Activated B cell treated with CpG ODN at 0.5 μM for 24 hours (primary cell): ENCODE measurements at regions of chr16 and their contacts with region 1.

Region 1: GRCh38 chr16:47258874-47259461 is 115.2 kb upstream of the NETO2 start:
- DNase-seq: no peak
- ATAC-seq: no peak
- H3K4me3 Mint-ChIP-seq: no peak overlapping the region
- H3K27ac Mint-ChIP-seq: no peak overlapping the region
- H3K4me1 Mint-ChIP-seq: no peaks in the 10 kb centered on the region
- H3K27me3 Mint-ChIP-seq: no peaks in the 10 kb centered on the region
- CTCF ChIP-seq: peak; percentile 92

Region 2: GRCh38 chr16:46937536-46937935 is 321.4 kb before region 1 on chr16:
- CTCF ChIA-PET with region 1: no interaction called
- POLR2A ChIA-PET with region 1: no interaction called
- intact Hi-C with region 1: no loop called
- DNase-seq: no peak
- ATAC-seq: no peak
- H3K4me3 Mint-ChIP-seq: no peak overlapping the region
- H3K27ac Mint-ChIP-seq: no peak overlapping the region
- H3K4me1 Mint-ChIP-seq: peaks cover 6% of the 10 kb centered on the region
- H3K27me3 Mint-ChIP-seq: no peaks in the 10 kb centered on the region
- CTCF ChIP-seq: no peak

Region 3: GRCh38 chr16:46947900-46948547 is 310.9 kb before region 1 on chr16:
- CTCF ChIA-PET with region 1: no interaction called
- POLR2A ChIA-PET with region 1: no interaction called
- intact Hi-C with region 1: loop called (anchors 5 kb)
- DNase-seq: no peak
- ATAC-seq: peak; percentile 74
- H3K4me3 Mint-ChIP-seq: no peak overlapping the region
- H3K27ac Mint-ChIP-seq: no peak overlapping the region
- H3K4me1 Mint-ChIP-seq: peaks cover 7% of the 10 kb centered on the region
- H3K27me3 Mint-ChIP-seq: no peaks in the 10 kb centered on the region
- CTCF ChIP-seq: no peak

Region 4: DNA sequence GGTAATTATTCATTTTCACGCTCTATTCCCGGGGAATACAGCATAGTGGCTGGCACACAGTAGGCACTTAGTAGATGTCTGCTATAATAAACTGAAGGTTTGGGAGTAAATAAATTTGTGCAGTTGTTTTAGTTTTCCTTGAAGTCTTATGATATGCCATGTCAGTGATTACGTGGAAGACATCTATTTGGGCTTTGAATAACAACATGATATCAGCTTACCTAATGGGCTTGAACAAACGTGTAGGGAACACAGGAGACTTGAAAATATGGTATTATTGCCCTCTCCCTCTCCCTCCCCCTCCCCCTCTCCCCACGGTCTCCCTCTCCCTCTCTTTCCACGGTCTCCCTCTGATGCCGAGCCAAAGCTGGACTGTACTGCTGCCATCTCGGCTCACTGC is 78.9 kb before region 1 on chr16:
- CTCF ChIA-PET with region 1: no interaction called
- POLR2A ChIA-PET with region 1: no interaction called
- intact Hi-C with region 1: no loop called
- DNase-seq: no peak
- ATAC-seq: no peak
- H3K4me3 Mint-ChIP-seq: no peak overlapping the region
- H3K27ac Mint-ChIP-seq: no peak overlapping the region
- H3K4me1 Mint-ChIP-seq: no peaks in the 10 kb centered on the region
- H3K27me3 Mint-ChIP-seq: no peaks in the 10 kb centered on the region
- CTCF ChIP-seq: no peak

Region 5: GRCh38 chr16:47204736-47205504 is 54.0 kb before region 1 on chr16:
- CTCF ChIA-PET with region 1: no interaction called
- POLR2A ChIA-PET with region 1: no interaction called
- intact Hi-C with region 1: no loop called
- DNase-seq: no peak
- ATAC-seq: no peak
- H3K4me3 Mint-ChIP-seq: no peak overlapping the region
- H3K27ac Mint-ChIP-seq: no peak overlapping the region
- H3K4me1 Mint-ChIP-seq: no peaks in the 10 kb centered on the region
- H3K27me3 Mint-ChIP-seq: no peaks in the 10 kb centered on the region
- CTCF ChIP-seq: no peak

Region 6: DNA sequence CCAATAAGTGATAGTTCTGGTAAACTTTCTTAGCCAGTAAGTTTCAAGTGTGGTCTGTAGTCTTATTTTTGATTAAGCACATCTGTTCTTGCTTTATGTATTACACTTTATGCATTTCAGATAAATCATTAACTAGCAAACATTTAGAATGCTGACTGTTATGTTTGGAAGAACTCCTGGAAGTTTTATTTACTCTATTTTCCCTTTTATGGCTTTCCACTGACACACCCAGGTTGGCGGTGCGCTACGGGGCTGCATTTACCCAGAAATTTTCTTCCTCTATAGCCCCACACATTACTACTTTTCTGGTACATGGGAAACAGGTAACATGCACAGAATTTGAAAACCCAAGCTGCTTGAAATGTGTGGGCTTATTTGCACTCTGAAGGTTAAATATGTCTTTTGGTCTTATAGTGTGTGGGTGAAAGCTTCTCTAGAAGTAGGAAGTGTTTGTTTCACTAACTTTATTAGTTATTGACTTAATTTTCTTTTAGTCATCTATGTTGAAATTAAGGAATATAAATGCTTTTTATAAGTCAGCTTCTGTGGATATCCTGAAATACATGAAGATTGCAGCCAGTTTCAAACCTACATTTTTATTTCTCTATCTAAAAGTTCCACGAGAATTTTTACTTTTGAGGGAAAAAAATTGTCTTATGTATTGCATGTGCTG is 405.8 kb after region 1 on chr16:
- CTCF ChIA-PET with region 1: no interaction called
- POLR2A ChIA-PET with region 1: no interaction called
- intact Hi-C with region 1: loop called (anchors 5 kb)
- DNase-seq: no peak
- ATAC-seq: no peak
- H3K4me3 Mint-ChIP-seq: no peak overlapping the region
- H3K27ac Mint-ChIP-seq: no peak overlapping the region
- H3K4me1 Mint-ChIP-seq: no peaks in the 10 kb centered on the region
- H3K27me3 Mint-ChIP-seq: no peaks in the 10 kb centered on the region
- CTCF ChIP-seq: no peak

Region 7: GRCh38 chr16:48054881-48055601 is 796.1 kb after region 1 on chr16:
- CTCF ChIA-PET with region 1: no interaction called
- POLR2A ChIA-PET with region 1: no interaction called
- intact Hi-C with region 1: loop called (anchors 1 kb)
- DNase-seq: no peak
- ATAC-seq: no peak
- H3K4me3 Mint-ChIP-seq: no peak overlapping the region
- H3K27ac Mint-ChIP-seq: no peak overlapping the region
- H3K4me1 Mint-ChIP-seq: peaks cover 4% of the 10 kb centered on the region
- H3K27me3 Mint-ChIP-seq: peaks cover 19% of the 10 kb centered on the region
- CTCF ChIP-seq: no peak